Endothelial cell of umbilical vein (primary cell): ENCODE measurements at regions of chr15 and their contacts with region 1.

Region 1: GRCh38 chr15:39686000-39686613 is 96.5 kb downstream of the FSIP1 start:
- DNase-seq: peak; percentile 66
- H3K4me3 ChIP-seq: no peak overlapping the region
- H3K27ac ChIP-seq: no peak overlapping the region
- H3K4me1 ChIP-seq: no peaks in the 10 kb centered on the region
- H3K27me3 ChIP-seq: no peaks in the 10 kb centered on the region
- CTCF ChIP-seq: peak; percentile 61 to 64
- POLR2A ChIP-seq: no peak

Region 2: GRCh38 chr15:38699633-38700230 is 986.4 kb before region 1 on chr15:
- CTCF ChIA-PET with region 1: no interaction called
- POLR2A ChIA-PET with region 1: no interaction called
- dilution Hi-C with region 1: no loop called
- intact Hi-C with region 1: loop called (anchors 10 kb)
- DNase-seq: peak; percentile 71
- H3K4me3 ChIP-seq: no peak overlapping the region
- H3K27ac ChIP-seq: no peak overlapping the region
- H3K4me1 ChIP-seq: no peaks in the 10 kb centered on the region
- H3K27me3 ChIP-seq: no peaks in the 10 kb centered on the region
- CTCF ChIP-seq: peak; percentile 79 to 94
- POLR2A ChIP-seq: no peak

Region 3: DNA sequence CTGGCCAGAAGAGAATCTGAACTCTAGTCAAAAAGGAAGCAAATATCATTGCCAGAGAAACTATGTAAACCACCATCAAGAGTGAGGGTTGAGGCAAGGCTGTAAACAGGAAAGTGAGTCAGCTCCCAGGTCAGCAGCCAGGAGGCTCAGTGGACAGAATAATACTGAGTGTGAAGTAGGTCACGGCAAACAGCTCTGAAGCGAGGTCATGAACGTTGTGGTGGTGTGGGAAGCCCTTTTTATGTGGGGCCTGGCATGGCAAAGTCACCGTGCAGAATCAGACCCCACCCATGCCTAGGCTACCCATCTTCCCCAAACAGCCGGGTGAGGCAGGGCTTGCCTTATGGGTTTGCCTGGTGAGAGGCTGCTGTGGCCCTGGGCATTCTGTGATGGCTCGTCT is 61.3 kb before region 1 on chr15:
- CTCF ChIA-PET with region 1: interaction called, 28 read pairs
- POLR2A ChIA-PET with region 1: no interaction called
- dilution Hi-C with region 1: no loop called
- intact Hi-C with region 1: loop called (anchors 5 kb)
- DNase-seq: peak; percentile 98
- H3K4me3 ChIP-seq: no peak overlapping the region
- H3K27ac ChIP-seq: peak overlapping the region; percentile 87
- H3K4me1 ChIP-seq: peaks cover 49% of the 10 kb centered on the region
- H3K27me3 ChIP-seq: no peaks in the 10 kb centered on the region
- CTCF ChIP-seq: no peak
- POLR2A ChIP-seq: peak; percentile 76

Region 4: GRCh38 chr15:39782441-39783138 is 96.5 kb after region 1 on chr15 and contains the start of gene FSIP1:
- CTCF ChIA-PET with region 1: interaction called, 7 read pairs
- POLR2A ChIA-PET with region 1: no interaction called
- dilution Hi-C with region 1: no loop called
- intact Hi-C with region 1: loop called (anchors 2 kb)
- DNase-seq: peak; percentile 97
- H3K4me3 ChIP-seq: peak within 1 kb of the TSS; percentile 87 to 98 (median 93)
- H3K27ac ChIP-seq: peak within 1 kb of the TSS; percentile 67
- H3K4me1 ChIP-seq: peaks cover 26% of the 10 kb centered on the region
- H3K27me3 ChIP-seq: no peaks in the 10 kb centered on the region
- CTCF ChIP-seq: no peak
- POLR2A ChIP-seq: peak; percentile 90
- total RNA-seq, gene FSIP1: 1.1 and 1.2 TPM in 2 replicates

Region 5: DNA sequence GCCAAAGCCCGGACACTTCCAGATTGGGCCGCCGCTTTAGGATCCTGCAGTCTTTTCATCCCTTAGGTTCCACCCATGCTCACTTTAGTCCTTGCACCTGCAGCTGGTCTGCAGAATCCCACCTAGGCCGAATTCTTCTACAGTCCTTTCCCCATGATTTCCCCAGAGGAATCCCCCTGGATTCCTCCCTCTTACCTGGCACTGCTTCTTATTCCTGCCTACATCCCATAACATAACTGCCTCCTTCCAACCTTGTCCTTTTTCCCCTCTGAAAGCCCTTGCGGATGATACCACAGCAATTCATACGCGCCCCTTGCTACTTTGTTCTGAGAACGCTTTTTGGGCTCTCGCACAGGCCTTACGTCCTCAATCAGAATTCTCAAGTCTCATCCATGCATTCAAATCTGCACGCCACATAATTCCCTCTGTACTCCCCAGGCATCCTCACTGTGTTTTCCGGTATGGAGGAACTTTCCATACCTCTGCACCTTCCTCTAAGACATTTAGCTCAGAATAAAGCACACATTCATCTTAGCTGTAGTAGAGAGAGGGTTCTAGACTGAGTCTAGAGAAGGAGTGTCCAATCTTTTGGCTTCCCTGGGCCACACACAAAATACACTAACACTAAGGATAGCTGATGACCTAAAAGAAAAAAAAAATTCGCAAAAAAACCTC is 248.4 kb after region 1 on chr15:
- CTCF ChIA-PET with region 1: interaction called, 9 read pairs
- POLR2A ChIA-PET with region 1: no interaction called
- dilution Hi-C with region 1: no loop called
- intact Hi-C with region 1: loop called (anchors 5 kb)
- DNase-seq: peak; percentile 47
- H3K4me3 ChIP-seq: peak overlapping the region; percentile 33 to 77 (median 57)
- H3K27ac ChIP-seq: peak overlapping the region; percentile 92
- H3K4me1 ChIP-seq: peaks cover 22% of the 10 kb centered on the region
- H3K27me3 ChIP-seq: no peaks in the 10 kb centered on the region
- CTCF ChIP-seq: no peak
- POLR2A ChIP-seq: no peak